GM10248 (cell line): ENCODE measurements at regions of chr3 and their contacts with region 1.

Region 1: GRCh38 chr3:99850608-99851007 is 32.9 kb downstream of the CMSS1 start:
- DNase-seq: no peak
- CTCF ChIP-seq: no peak

Region 2: GRCh38 chr3:99833617-99834205 is 16.9 kb before region 1 on chr3:
- CTCF ChIA-PET with region 1: interaction called, 18 read pairs
- POLR2A ChIA-PET with region 1: interaction called, 4 read pairs
- DNase-seq: no peak
- CTCF ChIP-seq: no peak

Region 3: GRCh38 chr3:99866261-99866761 is 15.7 kb after region 1 on chr3:
- CTCF ChIA-PET with region 1: interaction called, 15 read pairs
- POLR2A ChIA-PET with region 1: no interaction called
- DNase-seq: no peak
- CTCF ChIP-seq: no peak

Region 4: DNA sequence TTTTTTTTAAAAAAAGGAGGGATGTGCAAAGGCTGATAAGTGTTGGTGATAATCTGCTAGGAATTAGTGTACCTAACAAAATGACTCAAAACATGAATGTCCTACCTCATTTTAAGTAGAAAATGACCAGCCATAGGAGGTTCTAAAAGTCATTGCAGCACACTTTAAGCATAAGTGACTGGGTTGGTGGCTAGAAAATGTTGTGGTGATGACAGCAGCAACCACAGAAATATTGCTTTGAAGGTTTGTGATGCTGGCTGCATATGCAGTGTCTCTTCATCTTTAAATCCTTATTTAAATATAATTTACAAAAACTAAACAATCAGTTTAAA is 22.3 kb after region 1 on chr3:
- CTCF ChIA-PET with region 1: interaction called, 15 read pairs
- POLR2A ChIA-PET with region 1: no interaction called
- DNase-seq: peak; percentile 38
- CTCF ChIP-seq: no peak